GM12878 (cell line): ENCODE measurements at regions of chr5 and their contacts with region 1.

Region 1: GRCh38 chr5:71455427-71456361 is at the start of gene BDP1:
- DNase-seq: peak; percentile 77
- ATAC-seq: peak; percentile 95
- H3K4me3 ChIP-seq: peak within 1 kb of the TSS; percentile 72
- H3K27ac ChIP-seq: peak within 1 kb of the TSS; percentile 79
- H3K4me1 ChIP-seq: no peaks in the 10 kb centered on the region
- H3K27me3 ChIP-seq: no peaks in the 10 kb centered on the region; a peak in 1 of 4 replicates
- CTCF ChIP-seq: peak in 2 of 3 experiments; percentile 37 to 43; a peak in 4 of 6 replicates
- EP300 ChIP-seq: peak in 1 of 2 experiments; percentile 46; a peak in 1 of 4 replicates
- POLR2A ChIP-seq: peak; percentile 88
- RAD21 ChIP-seq: no peak
- polyA plus RNA-seq, gene BDP1: 6.1 to 7.1 TPM

Region 2: GRCh38 chr5:71586941-71587765 is 131.5 kb after region 1 on chr5 and contains the start of gene MCCC2:
- CTCF ChIA-PET with region 1: no interaction called
- POLR2A ChIA-PET with region 1: interaction called, 3 read pairs
- RAD21 ChIA-PET with region 1: no interaction called
- SMC1A ChIA-PET with region 1: interaction called, 4 read pairs
- in situ Hi-C with region 1: no loop called
- intact Hi-C with region 1: loop called (anchors 2 kb)
- DNase-seq: peak; percentile 89
- ATAC-seq: peak; percentile 97
- H3K4me3 ChIP-seq: peak within 1 kb of the TSS; percentile 98
- H3K27ac ChIP-seq: peak within 1 kb of the TSS; percentile 91
- H3K4me1 ChIP-seq: peaks cover 2% of the 10 kb centered on the region; the same call in 1 of the 2 replicates
- H3K27me3 ChIP-seq: no peaks in the 10 kb centered on the region
- CTCF ChIP-seq: no peak
- EP300 ChIP-seq: no peak
- POLR2A ChIP-seq: peak; percentile 98
- RAD21 ChIP-seq: no peak
- polyA plus RNA-seq, gene MCCC2: 22.2 to 29.1 TPM